ENCODE measurements at regions of chr1 and their contacts with region 1.

Region 1: GRCh38 chr1:89843281-89844121 is 22.7 kb downstream of the LRRC8D start:
- DNase-seq: peak; percentile 68 to 73
- H3K4me3 ChIP-seq: peak overlapping the region; percentile 70
- H3K4me3 Mint-ChIP-seq: peak overlapping the region; percentile 84
- H3K27ac Mint-ChIP-seq: peak overlapping the region; percentile 67
- H3K4me1 ChIP-seq: peaks cover 6% of the 10 kb centered on the region; the same call in 1 of the 2 replicates
- H3K4me1 Mint-ChIP-seq: peaks cover 16% of the 10 kb centered on the region
- H3K27me3 ChIP-seq: no peaks in the 10 kb centered on the region
- H3K27me3 Mint-ChIP-seq: no peaks in the 10 kb centered on the region
- CTCF ChIP-seq: peak; percentile 32 to 55

Region 2: GRCh38 chr1:89708751-89709375 is 134.6 kb before region 1 on chr1:
- CTCF ChIA-PET with region 1: no interaction called
- POLR2A ChIA-PET with region 1: no interaction called
- intact Hi-C with region 1: no loop called
- DNase-seq: no peak
- H3K4me3 ChIP-seq: no peak overlapping the region
- H3K4me3 Mint-ChIP-seq: no peak overlapping the region
- H3K27ac Mint-ChIP-seq: no peak overlapping the region
- H3K4me1 ChIP-seq: no peaks in the 10 kb centered on the region
- H3K4me1 Mint-ChIP-seq: no peaks in the 10 kb centered on the region
- H3K27me3 ChIP-seq: no peaks in the 10 kb centered on the region
- H3K27me3 Mint-ChIP-seq: peaks cover 10% of the 10 kb centered on the region
- CTCF ChIP-seq: no peak

Region 3: GRCh38 chr1:89855413-89856123 is 12.1 kb after region 1 on chr1:
- CTCF ChIA-PET with region 1: no interaction called
- POLR2A ChIA-PET with region 1: no interaction called
- intact Hi-C with region 1: no loop called
- DNase-seq: no peak
- H3K4me3 ChIP-seq: no peak overlapping the region
- H3K4me3 Mint-ChIP-seq: no peak overlapping the region
- H3K27ac Mint-ChIP-seq: no peak overlapping the region
- H3K4me1 ChIP-seq: no peaks in the 10 kb centered on the region
- H3K4me1 Mint-ChIP-seq: no peaks in the 10 kb centered on the region
- H3K27me3 ChIP-seq: no peaks in the 10 kb centered on the region
- H3K27me3 Mint-ChIP-seq: no peaks in the 10 kb centered on the region
- CTCF ChIP-seq: no peak

Region 4: DNA sequence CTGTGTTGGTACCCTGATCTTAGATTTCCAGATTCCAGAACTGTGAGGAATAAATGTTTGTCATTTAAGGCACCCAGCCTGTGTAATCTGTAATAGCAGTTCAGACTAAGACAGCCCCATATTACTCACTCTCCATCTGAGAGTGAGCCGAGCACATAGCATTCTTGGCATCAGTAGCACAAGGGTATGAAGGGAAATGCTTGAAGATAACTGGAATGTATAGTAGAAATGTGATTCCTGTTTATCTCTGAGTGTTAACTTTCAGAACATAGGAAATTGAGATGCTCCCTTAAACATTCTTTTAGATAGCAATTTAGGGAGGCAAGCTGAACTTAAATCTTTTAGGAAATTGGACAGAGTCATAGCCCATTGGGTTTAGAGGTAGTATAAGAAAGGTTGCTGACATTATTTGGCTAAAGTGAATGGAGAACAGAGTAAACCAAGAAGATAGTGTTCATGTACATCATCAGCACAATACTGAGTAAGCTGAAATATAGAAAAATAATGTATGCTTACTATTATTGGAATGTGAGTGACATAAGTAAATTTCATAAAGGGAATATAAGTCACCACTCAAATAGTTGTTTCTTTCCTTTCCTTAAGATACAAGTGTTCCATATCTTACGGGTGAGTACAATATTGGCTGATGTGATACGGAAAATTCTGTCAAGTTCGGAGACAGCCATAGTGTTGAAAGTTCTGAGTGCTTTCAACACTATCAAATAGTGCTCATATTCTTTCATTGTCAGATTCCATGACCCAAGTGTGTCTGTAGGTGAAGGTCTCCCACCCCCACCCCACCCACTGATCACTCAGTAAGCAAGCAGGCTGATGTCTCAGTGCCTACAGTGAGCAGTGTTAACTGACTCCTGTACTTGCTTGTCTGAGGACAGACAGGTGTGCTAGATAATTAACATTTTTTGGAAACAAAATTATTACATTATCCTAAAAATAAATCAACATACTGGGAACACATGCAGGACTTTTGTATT is 51.0 kb after region 1 on chr1:
- CTCF ChIA-PET with region 1: no interaction called
- POLR2A ChIA-PET with region 1: no interaction called
- intact Hi-C with region 1: loop called (anchors 5 kb)
- DNase-seq: no peak
- H3K4me3 ChIP-seq: no peak overlapping the region
- H3K4me3 Mint-ChIP-seq: no peak overlapping the region
- H3K27ac Mint-ChIP-seq: no peak overlapping the region
- H3K4me1 ChIP-seq: peaks cover 41% of the 10 kb centered on the region
- H3K4me1 Mint-ChIP-seq: peaks cover 36% of the 10 kb centered on the region
- H3K27me3 ChIP-seq: no peaks in the 10 kb centered on the region
- H3K27me3 Mint-ChIP-seq: no peaks in the 10 kb centered on the region
- CTCF ChIP-seq: no peak

Region 5: DNA sequence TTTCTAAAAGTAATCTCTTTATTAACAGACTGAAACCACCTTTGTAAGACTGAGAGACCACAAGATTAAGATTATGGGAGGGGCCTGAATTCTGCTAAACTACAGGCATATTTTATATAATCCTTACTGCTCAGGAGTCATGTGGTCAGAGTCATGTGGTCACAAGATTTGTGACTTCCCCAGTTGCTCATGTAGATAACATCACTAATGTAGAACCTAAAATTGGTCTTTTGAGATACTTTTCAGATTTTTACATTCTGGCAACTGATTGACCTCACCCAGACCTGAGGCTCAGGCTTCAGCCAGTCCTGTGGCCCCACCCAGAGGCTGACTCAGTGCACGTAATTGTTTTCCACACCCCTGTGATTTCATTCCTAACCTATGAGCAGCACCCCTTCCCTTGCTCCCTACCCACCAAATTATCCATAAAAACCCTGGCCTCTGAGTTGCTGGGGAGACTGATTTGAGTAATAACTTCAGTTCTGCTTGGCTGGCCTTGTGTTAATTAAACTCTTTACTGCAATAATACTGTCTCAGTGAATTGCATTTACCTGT is 109.6 kb after region 1 on chr1:
- CTCF ChIA-PET with region 1: interaction called, 4 read pairs
- POLR2A ChIA-PET with region 1: no interaction called
- intact Hi-C with region 1: loop called (anchors 2 kb)
- DNase-seq: peak; percentile 48 to 61
- H3K4me3 ChIP-seq: no peak overlapping the region
- H3K4me3 Mint-ChIP-seq: no peak overlapping the region
- H3K27ac Mint-ChIP-seq: no peak overlapping the region
- H3K4me1 ChIP-seq: peaks cover 52% of the 10 kb centered on the region
- H3K4me1 Mint-ChIP-seq: peaks cover 25% of the 10 kb centered on the region
- H3K27me3 ChIP-seq: no peaks in the 10 kb centered on the region
- H3K27me3 Mint-ChIP-seq: no peaks in the 10 kb centered on the region
- CTCF ChIP-seq: no peak